Activated CD4-positive, alpha-beta T cell treated with anti-CD3 and anti-CD28 coated beads for 36 hours (primary cell): ENCODE measurements at regions of chr10 and their contacts with region 1.

Region 1: DNA sequence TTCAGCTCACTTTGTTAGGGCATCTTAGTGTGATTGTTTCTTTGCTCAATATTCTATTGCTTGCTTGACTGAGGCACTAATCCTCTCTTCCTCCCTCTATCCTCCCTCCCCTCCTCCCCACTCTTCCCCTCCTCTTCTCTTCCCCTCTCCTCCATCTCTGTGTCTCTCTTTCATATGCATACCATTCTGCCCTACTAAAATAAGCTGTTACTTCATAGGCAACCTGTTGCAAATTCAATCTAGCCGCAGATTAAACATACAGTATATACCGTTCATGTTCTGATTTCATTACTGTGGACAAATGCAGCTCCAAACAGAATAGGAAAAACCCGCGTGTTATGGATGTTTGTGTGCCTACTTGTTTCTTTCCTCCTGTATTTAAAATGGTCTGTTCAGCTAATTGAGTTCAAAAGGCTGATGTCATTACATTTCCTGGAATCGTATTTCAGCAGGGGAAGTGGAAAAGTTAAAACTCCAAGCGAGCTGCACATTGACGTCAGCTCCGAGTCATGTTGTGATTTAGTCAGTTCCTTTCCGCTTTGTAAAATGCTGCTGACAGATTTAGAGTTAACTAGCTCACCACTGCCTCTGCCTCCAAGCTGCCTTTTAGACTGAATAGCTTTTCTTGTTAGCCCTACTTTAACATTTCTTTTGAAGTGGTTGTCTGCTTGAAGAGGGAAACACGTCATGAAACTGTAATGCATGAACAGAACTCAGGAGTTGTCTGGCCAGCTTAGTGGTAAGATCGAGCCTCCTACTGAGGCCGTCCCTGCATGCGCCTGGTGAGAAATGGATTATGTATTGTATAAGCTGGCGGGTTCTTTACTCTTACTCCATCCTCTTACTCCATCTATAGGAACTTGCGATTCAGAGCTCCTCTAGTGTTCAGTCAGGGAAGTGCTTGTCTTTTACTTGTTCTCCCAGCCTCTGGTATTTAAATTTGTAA is 69.0 kb downstream of the CREM start:
- DNase-seq: peak; percentile 89
- ATAC-seq: peak; percentile 91
- H3K4me3 Mint-ChIP-seq: peak overlapping the region; percentile 79
- H3K27ac Mint-ChIP-seq: peak overlapping the region; percentile 98
- H3K4me1 Mint-ChIP-seq: peaks cover 50% of the 10 kb centered on the region
- H3K27me3 Mint-ChIP-seq: no peaks in the 10 kb centered on the region

Region 2: DNA sequence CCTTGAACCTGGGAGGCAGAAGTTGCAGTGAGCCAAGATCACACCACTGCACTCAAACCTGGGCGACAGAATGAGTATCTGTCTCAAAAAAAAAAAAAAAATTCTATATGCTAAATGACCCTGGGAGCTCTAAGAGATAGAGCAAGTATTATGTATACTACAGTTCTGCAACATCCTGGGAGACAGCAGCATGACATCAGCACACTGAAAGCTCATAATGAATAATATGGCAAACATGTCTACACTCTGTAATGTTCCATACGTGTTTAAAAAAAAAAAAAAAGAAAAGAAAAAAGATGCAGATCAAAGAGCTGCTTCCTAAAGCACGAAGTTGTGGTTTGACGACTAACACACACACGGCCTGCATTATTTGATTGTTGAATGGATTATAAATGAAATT is 178.0 kb before region 1 on chr10:
- CTCF ChIA-PET with region 1: no interaction called
- POLR2A ChIA-PET with region 1: no interaction called
- intact Hi-C with region 1: loop called in 1 of 2 experiments (anchors 1 kb)
- DNase-seq: peak; percentile 34
- ATAC-seq: peak; percentile 91
- H3K4me3 Mint-ChIP-seq: no peak overlapping the region
- H3K27ac Mint-ChIP-seq: no peak overlapping the region
- H3K4me1 Mint-ChIP-seq: peaks cover 22% of the 10 kb centered on the region
- H3K27me3 Mint-ChIP-seq: no peaks in the 10 kb centered on the region

Region 3: DNA sequence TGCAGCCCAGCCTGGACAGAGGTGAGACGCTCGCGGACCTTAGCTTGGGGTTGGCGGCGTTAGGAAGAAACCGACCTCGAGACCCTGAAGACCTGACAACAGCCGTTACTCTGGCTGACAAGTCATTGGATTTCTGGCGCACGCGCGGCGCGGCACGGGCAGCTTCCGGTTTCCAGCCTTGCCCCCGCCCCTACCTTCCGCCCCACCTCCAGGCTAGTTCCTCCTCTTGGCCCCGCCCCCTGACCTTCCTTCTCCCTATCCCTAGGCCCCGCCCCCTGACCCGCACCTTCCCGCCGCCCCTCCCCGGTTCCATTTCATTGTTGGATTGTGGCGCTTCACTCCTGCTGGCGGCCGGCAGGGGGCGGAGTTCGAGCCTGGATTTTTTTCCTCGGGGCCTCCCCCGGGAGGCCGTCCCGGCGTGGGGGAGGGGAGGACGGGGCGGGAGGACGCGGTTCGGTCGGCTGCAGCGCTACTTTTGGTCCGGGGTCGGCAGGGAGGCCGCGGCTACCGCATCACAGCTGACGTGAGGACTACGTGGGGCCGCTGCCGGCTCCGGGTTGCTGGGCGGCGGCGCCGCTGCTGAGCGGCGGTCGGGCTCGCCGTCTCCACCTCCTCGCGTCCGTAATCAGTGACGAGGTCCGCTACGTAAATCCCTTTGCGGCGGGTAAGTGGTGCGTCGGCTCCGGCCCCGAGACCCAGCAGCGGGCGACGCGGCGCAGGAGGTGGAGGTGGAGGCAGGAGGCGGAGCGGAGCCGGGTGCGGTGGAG is 68.9 kb before region 1 on chr10 and contains the start of gene CREM:
- CTCF ChIA-PET with region 1: interaction called, 102 read pairs
- POLR2A ChIA-PET with region 1: interaction called, 93 read pairs
- intact Hi-C with region 1: loop called (anchors 1 kb)
- DNase-seq: peak; percentile 100
- ATAC-seq: peak; percentile 83
- H3K4me3 Mint-ChIP-seq: peak within 1 kb of the TSS; percentile 86
- H3K27ac Mint-ChIP-seq: peak within 1 kb of the TSS; percentile 99
- H3K4me1 Mint-ChIP-seq: peaks cover 57% of the 10 kb centered on the region
- H3K27me3 Mint-ChIP-seq: no peaks in the 10 kb centered on the region
- total RNA-seq, gene CREM: 106 to 126 TPM

Region 4: DNA sequence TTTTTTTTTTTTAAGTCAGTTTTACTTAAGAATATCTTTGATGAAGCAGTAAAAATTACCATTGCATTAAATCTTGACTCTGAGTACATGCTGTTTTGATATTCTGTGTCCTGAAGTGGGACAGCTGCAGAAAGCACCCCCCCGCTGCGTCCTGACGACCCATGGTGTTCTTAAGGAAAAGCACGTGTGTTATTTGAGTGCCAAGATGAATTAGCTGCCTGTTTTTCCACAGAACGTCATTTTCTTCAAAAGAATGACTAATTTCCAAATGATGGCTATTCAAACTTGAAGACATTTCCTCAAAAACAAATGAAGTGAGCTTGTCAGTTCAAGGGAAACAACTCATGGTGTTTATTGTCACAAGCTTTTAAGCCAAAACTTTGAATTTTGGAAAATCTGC is 23.1 kb before region 1 on chr10:
- CTCF ChIA-PET with region 1: interaction called, 19 read pairs
- POLR2A ChIA-PET with region 1: interaction called, 3 read pairs
- intact Hi-C with region 1: loop called in 1 of 2 experiments (anchors 2 kb)
- DNase-seq: no peak
- ATAC-seq: no peak
- H3K4me3 Mint-ChIP-seq: no peak overlapping the region
- H3K27ac Mint-ChIP-seq: no peak overlapping the region
- H3K4me1 Mint-ChIP-seq: peaks cover 5% of the 10 kb centered on the region
- H3K27me3 Mint-ChIP-seq: no peaks in the 10 kb centered on the region

Region 5: DNA sequence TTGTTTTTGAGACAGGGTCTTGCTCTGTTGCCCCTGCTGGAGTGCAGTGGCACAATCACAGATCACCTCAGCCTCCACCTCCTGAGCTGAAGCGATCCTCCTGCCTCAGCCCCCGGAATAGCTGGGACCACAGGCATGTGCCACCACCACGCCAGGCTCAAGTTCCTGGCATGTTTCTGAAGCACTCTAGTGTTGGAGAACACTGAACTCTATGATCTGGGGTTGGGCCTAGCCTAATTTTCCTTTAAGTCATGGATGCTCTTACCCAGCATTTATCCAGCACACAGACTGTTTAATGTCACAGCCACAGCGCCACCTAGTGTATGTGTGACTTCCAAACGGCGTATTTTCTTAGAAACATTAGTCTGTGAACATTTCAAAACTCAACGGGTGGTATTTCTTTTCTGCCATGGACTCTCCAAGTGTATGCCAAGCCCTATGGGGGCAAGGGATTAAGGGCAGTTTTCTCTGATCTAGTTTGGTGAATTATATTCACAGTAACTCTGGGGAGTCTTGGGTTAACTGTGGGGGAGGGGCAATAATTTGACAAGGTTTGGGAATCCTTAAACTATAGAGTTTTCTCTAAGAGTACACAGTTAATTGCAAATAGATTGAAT is 22.8 kb after region 1 on chr10:
- CTCF ChIA-PET with region 1: interaction called, 63 read pairs
- POLR2A ChIA-PET with region 1: interaction called, 3 read pairs
- intact Hi-C with region 1: loop called (anchors 1 kb)
- DNase-seq: peak; percentile 94
- ATAC-seq: peak; percentile 83
- H3K4me3 Mint-ChIP-seq: peak overlapping the region; percentile 47
- H3K27ac Mint-ChIP-seq: peak overlapping the region; percentile 96
- H3K4me1 Mint-ChIP-seq: peaks cover 52% of the 10 kb centered on the region
- H3K27me3 Mint-ChIP-seq: peaks cover 2% of the 10 kb centered on the region